ENCODE measurements at regions of chr14 and their contacts with region 1.

Region 1: DNA sequence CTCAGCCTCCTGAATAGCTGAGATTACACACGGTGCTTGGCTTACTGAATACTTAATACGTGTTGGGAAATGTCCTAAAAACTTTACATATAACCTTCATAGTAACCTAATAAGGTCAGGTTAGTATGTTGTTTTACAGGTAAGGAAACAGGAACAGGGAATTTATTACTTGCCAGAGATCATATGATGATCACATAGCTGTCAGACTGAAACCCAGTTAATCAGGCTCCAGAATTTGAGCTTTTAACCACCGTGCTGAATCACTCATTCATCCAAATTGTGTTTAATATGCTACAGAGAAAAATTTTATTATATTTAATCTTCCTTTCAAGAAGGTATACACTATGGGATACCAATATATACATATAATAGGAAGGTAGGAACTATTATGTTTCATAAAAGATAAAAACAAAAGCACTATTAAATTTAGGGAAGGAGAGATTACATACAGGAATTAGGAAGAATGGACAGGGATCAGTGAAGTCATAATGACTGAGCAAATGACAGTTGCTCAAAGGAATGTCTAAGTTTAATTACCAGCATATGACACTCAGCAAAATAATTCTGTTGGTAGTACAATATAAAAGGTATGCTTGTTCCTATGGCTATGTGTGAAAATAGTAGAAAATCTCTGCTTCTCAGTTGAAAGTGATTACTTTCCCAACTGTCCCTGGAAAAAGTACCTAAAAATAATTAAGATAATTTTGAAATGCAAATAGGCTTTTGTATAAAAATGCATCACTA is 59.3 kb downstream of the HEATR5A start:
- DNase-seq: no peak
- ATAC-seq: no peak; the same call in 1 of the 2 replicates
- H3K4me3 ChIP-seq: no peak overlapping the region
- H3K27ac ChIP-seq: no peak overlapping the region
- H3K4me1 ChIP-seq: peaks cover 0 to 19% of the 10 kb centered on the region in 2 experiments; a peak in 2 of 4 replicates
- H3K27me3 ChIP-seq: no peaks in the 10 kb centered on the region
- CTCF ChIP-seq: no peak
- POLR2A ChIP-seq: no peak
- RAD21 ChIP-seq: no peak

Region 2: GRCh38 chr14:30656190-30656632 is 704.9 kb before region 1 on chr14:
- CTCF ChIA-PET with region 1: no interaction called
- POLR2A ChIA-PET with region 1: no interaction called
- RAD21 ChIA-PET with region 1: no interaction called
- intact Hi-C with region 1: loop called (anchors 1 kb)
- DNase-seq: peak; percentile 15
- ATAC-seq: peak; percentile 82
- H3K4me3 ChIP-seq: no peak overlapping the region
- H3K27ac ChIP-seq: no peak overlapping the region
- H3K4me1 ChIP-seq: no peaks in the 10 kb centered on the region
- H3K27me3 ChIP-seq: no peaks in the 10 kb centered on the region
- CTCF ChIP-seq: peak; percentile 37 to 85 (median 80); a peak in 5 of 6 replicates
- POLR2A ChIP-seq: no peak
- RAD21 ChIP-seq: peak; percentile 40; the same call in 1 of the 2 replicates

Region 3: GRCh38 chr14:30980980-30981379 is 380.1 kb before region 1 on chr14:
- CTCF ChIA-PET with region 1: no interaction called
- POLR2A ChIA-PET with region 1: no interaction called
- RAD21 ChIA-PET with region 1: no interaction called
- intact Hi-C with region 1: loop called (anchors 1 kb)
- DNase-seq: no peak
- ATAC-seq: no peak
- H3K4me3 ChIP-seq: no peak overlapping the region
- H3K27ac ChIP-seq: peak overlapping the region; percentile 44; the same call in 1 of the 2 replicates
- H3K4me1 ChIP-seq: peaks cover 17 to 28% of the 10 kb centered on the region in 2 experiments
- H3K27me3 ChIP-seq: no peaks in the 10 kb centered on the region
- CTCF ChIP-seq: no peak
- POLR2A ChIP-seq: no peak
- RAD21 ChIP-seq: no peak

Region 4: GRCh38 chr14:31137214-31137889 is 223.7 kb before region 1 on chr14:
- CTCF ChIA-PET with region 1: no interaction called
- POLR2A ChIA-PET with region 1: no interaction called
- RAD21 ChIA-PET with region 1: no interaction called
- intact Hi-C with region 1: loop called (anchors 10 kb)
- DNase-seq: peak; percentile 68
- ATAC-seq: peak; percentile 98
- H3K4me3 ChIP-seq: 0 out of 4 replicates have a peak overlapping the region, but pooled peaks of 1 of the 2 experiments have one; percentile 9
- H3K27ac ChIP-seq: peak overlapping the region; percentile 31
- H3K4me1 ChIP-seq: peaks cover 9 to 22% of the 10 kb centered on the region in 2 experiments
- H3K27me3 ChIP-seq: no peaks in the 10 kb centered on the region
- CTCF ChIP-seq: no peak
- POLR2A ChIP-seq: no peak
- RAD21 ChIP-seq: no peak; the same call in 1 of the 2 replicates

Region 5: DNA sequence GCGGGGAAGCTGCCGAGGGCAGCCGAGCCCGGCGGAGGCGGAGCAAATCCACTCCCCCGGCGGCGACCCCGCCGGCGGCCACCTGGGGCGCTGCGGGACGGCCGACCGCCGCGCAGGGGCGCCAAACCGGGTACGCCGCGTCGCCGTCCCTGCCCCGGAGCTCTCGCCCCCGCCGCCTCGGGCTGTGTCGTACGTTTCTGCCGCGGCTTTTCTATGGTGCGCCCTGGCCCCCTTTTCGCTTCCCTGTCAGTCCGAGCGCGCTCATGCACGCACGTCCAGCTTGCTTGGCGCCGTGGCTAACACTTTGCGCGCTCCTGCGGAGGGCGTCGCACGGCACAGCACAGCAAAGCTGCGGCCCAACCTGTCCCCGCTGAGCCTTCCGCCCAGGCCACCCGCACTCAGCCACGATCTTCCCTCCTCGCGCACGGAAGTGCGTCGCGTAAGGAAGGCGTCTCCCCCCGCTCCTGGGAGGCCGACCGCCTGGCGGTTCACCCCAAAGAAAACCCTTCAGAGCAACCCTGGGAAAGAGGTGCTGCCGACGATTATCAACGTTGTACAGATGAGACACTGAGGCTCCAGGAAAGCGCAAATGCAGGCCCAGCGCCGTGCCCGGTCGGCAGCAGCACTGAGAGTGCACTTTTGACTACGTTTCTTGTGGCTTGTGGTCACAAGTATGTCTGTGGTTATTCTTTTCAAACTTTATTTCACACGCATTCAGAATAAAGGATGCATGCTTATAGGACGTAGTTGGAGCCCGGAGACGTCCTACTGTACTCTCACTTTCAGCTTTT is 153.1 kb before region 1 on chr14 and contains the start of gene HECTD1:
- CTCF ChIA-PET with region 1: no interaction called
- POLR2A ChIA-PET with region 1: no interaction called
- RAD21 ChIA-PET with region 1: no interaction called
- intact Hi-C with region 1: loop called (anchors 10 kb)
- DNase-seq: peak; percentile 67
- ATAC-seq: peak; percentile 87
- H3K4me3 ChIP-seq: peak within 1 kb of the TSS; percentile 83 to 84
- H3K27ac ChIP-seq: peak within 1 kb of the TSS; percentile 99
- H3K4me1 ChIP-seq: peaks cover 18 to 31% of the 10 kb centered on the region in 2 experiments
- H3K27me3 ChIP-seq: no peaks in the 10 kb centered on the region
- CTCF ChIP-seq: peak in 2 of 3 experiments; percentile 55 to 60; a peak in 4 of 6 replicates
- POLR2A ChIP-seq: peak; percentile 81
- RAD21 ChIP-seq: no peak; the same call in none of the 2 replicates
- total RNA-seq, gene HECTD1: 160 TPM